ENCODE measurements at regions of chr14 and their contacts with region 1.

Region 1: DNA sequence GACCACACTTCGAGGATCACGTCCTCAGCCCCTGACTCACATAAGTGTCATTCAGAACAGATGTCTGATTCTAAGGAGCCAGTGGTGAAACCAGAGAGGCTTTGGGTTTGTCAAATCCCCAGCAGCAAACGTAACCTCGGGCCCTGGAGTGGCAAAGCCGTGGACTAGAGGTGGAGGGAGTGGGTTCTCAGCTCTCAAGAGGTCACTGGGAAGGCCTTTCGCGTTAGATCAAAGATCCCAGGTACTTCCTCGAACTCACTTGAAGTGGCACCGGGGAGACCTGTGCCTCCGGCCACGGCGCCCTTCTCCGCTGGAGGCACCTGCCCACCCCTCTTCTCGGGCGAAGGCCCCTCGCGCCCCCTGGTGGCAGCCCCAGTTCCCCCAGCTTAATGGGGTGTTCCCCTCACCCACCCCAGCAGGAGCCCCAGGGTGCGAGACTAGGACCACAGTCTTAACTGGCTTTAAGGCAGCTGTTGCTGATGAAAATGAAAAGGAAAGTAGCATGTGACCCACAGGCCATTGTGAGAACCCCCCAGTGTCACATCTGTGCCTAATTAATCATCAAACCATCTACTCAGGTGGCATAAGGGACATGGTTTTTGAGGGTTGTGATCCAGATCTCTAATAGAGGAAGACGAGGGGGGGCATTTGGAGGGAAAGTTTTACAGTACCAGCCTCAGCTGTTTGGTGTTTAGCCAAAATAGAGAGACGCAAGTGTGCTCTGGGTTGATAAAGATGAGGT is 672 bp upstream of the ESR2 start:
- DNase-seq: peak; percentile 20
- H3K4me3 ChIP-seq: peak overlapping the region; percentile 55
- H3K27ac ChIP-seq: no peak overlapping the region
- H3K27me3 ChIP-seq: peaks cover 16% of the 10 kb centered on the region
- CTCF ChIP-seq: peak; percentile 92

Region 2: DNA sequence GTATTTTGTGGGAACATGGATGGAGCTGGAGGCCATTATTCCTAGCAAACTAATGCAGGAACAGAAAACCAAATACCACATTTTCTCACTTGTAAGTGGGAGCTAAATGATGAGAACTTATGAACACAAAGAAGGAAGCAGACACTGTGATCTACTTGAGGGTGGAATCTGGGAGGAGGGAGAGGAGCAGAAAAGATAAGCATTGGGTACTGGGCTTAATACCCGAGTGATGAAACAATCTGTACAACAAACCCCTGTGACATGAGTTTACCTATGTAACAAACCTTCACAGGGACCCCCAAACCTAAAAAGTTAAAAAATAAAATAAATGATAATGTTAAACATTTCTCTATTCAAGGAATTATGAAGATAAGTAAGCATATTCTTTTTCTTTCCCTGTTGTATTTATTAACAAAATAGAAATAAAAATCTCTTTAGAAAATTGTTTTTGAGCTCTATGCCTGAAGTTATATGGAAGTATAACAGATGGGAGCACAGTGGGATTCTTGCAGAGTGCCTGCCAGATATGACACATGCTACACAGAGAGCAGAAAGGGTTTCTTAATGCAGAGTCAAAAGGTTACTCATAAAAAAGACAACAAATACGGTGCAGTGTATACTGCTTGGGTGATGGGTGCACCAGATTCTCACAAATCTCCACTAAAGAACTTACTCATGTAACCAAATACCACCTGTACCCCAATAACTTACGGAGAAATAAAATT is 494.0 kb before region 1 on chr14:
- CTCF ChIA-PET with region 1: interaction called, 27 read pairs
- POLR2A ChIA-PET with region 1: no interaction called
- DNase-seq: no peak
- H3K4me3 ChIP-seq: no peak overlapping the region
- H3K27ac ChIP-seq: no peak overlapping the region
- H3K27me3 ChIP-seq: no peaks in the 10 kb centered on the region
- CTCF ChIP-seq: no peak

Region 3: GRCh38 chr14:64005822-64006221 is 289.0 kb before region 1 on chr14:
- CTCF ChIA-PET with region 1: interaction called, 35 read pairs
- POLR2A ChIA-PET with region 1: no interaction called
- DNase-seq: no peak
- H3K4me3 ChIP-seq: no peak overlapping the region
- H3K27ac ChIP-seq: no peak overlapping the region
- H3K27me3 ChIP-seq: no peaks in the 10 kb centered on the region
- CTCF ChIP-seq: no peak

Region 4: DNA sequence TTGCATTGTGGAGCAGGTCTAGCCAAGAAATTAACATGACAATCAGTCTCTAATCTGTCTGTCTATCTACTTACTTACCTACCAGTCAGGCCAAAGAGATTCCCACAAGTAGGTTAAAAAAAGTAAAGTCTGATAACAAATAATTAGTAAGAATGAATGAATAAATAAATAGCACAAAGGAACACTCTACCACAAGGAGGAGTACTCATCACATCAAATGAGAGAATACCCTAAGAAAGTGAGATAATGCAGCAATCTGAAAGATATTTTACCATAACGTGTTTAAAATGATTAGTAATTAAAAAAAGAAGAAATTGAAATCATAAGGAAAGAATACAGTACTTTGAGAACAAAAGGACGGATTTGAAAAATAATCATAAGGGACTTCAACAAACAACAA is 254.8 kb before region 1 on chr14:
- CTCF ChIA-PET with region 1: interaction called, 57 read pairs
- POLR2A ChIA-PET with region 1: no interaction called
- DNase-seq: peak; percentile 10
- H3K4me3 ChIP-seq: no peak overlapping the region
- H3K27ac ChIP-seq: no peak overlapping the region
- H3K27me3 ChIP-seq: no peaks in the 10 kb centered on the region
- CTCF ChIP-seq: peak; percentile 60

Region 5: GRCh38 chr14:64137657-64138290 is 157.1 kb before region 1 on chr14:
- CTCF ChIA-PET with region 1: interaction called, 35 read pairs
- POLR2A ChIA-PET with region 1: no interaction called
- DNase-seq: no peak
- H3K4me3 ChIP-seq: no peak overlapping the region
- H3K27ac ChIP-seq: no peak overlapping the region
- H3K27me3 ChIP-seq: no peaks in the 10 kb centered on the region
- CTCF ChIP-seq: peak; percentile 44

Measured in AG04450 (cell line).